Vagina (tissue), 2 donors: ENCODE measurements at regions of chr5 and their contacts with region 1.

Region 1: DNA sequence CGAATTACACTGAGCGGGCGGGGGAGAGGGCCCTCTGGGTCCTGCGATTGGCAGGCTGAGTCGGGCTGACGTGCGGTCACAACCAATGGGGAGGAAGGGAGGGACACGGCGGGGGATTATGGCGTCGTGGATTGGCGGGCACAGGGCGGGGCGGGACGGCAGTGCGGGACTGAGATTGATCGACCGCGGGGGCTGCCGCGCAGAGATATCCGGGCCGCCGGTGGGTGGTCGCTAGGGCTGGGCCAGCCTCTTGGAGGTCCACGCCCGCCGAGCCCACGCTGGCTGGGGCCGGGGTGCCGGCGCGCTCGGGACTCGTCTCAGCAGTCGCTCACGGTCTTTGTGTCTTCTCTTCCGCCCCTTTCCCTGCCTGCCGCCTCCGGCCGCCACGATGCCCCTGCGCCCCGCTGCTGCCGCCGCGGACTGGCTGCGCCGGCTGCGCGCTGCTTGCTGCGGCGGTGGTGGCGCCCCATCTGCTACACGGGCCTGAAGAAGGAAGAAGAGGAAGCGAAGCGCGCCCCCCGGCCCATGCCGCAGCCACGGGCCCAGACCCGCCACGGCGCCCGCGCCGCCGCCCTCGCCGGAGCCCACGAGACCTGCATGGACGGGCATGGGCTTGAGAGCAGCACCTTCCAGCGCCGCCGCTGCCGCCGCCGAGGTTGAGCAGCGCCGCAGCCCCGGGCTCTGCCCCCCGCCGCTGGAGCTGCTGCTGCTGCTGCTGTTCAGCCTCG is at the start of gene RGMB:
- DNase-seq: peak in 1 of 2 donors; percentile 99
- H3K4me3 ChIP-seq: peak within 1 kb of the TSS; percentile 80 to 86
- H3K27ac ChIP-seq: peak within 1 kb of the TSS; percentile 95
- H3K4me1 ChIP-seq: peaks cover 56% of the 10 kb centered on the region
- H3K27me3 ChIP-seq: no peaks in the 10 kb centered on the region
- CTCF ChIP-seq: no peak
- POLR2A ChIP-seq: peak in 1 of 2 donors; percentile 89
- total RNA-seq, gene RGMB: 39.0 TPM

Region 2: GRCh38 chr5:98433673-98434072 is 340.0 kb before region 1 on chr5:
- intact Hi-C with region 1: loop called (anchors 10 kb)
- DNase-seq: no peak
- H3K4me3 ChIP-seq: no peak overlapping the region
- H3K27ac ChIP-seq: no peak overlapping the region
- H3K4me1 ChIP-seq: no peaks in the 10 kb centered on the region
- H3K27me3 ChIP-seq: no peaks in the 10 kb centered on the region
- CTCF ChIP-seq: no peak
- POLR2A ChIP-seq: no peak

Region 3: GRCh38 chr5:98928873-98929696 is 155.5 kb after region 1 on chr5 and contains the start of gene CHD1:
- intact Hi-C with region 1: loop called (anchors 10 kb)
- DNase-seq: peak; percentile 96 to 98
- H3K4me3 ChIP-seq: peak within 1 kb of the TSS; percentile 87 to 99
- H3K27ac ChIP-seq: peak within 1 kb of the TSS; percentile 100
- H3K4me1 ChIP-seq: peaks cover 45% of the 10 kb centered on the region
- H3K27me3 ChIP-seq: no peaks in the 10 kb centered on the region
- CTCF ChIP-seq: no peak
- POLR2A ChIP-seq: peak in 1 of 2 donors; percentile 92
- total RNA-seq, gene CHD1: 81.5 TPM